Dorsolateral prefrontal cortex (tissue), 120 donors: ENCODE measurements at regions of chr2 and their contacts with region 1.

Region 1: GRCh38 chr2:190804182-190804795 is 76.3 kb upstream of the GLS start:
- DNase-seq: peak in 1 of 10 donors; percentile 5
- H3K4me3 ChIP-seq: peak overlapping the region in 5 of 59 donors; percentile 16 to 35 (median 24)
- H3K27ac ChIP-seq: no peak overlapping the region
- H3K27me3 ChIP-seq: no peaks in the 10 kb centered on the region
- CTCF ChIP-seq: peak; percentile 67 to 87 (median 79)

Region 2: GRCh38 chr2:190343500-190344275 is 460.6 kb before region 1 on chr2 and contains the start of gene INPP1:
- intact Hi-C with region 1: loop called in 1 of 2 experiments (anchors 5 kb)
- DNase-seq: peak in 9 of 10 donors; percentile 31 to 79 (median 55)
- H3K4me3 ChIP-seq: peak within 1 kb of the TSS; percentile 66 to 94 (median 81)
- H3K27ac ChIP-seq: peak within 1 kb of the TSS; percentile 65 to 98 (median 95)
- H3K27me3 ChIP-seq: no peaks in the 10 kb centered on the region
- CTCF ChIP-seq: no peak
- total RNA-seq, gene INPP1: 32.3 to 82.1 (median 48.4) TPM

Region 3: DNA sequence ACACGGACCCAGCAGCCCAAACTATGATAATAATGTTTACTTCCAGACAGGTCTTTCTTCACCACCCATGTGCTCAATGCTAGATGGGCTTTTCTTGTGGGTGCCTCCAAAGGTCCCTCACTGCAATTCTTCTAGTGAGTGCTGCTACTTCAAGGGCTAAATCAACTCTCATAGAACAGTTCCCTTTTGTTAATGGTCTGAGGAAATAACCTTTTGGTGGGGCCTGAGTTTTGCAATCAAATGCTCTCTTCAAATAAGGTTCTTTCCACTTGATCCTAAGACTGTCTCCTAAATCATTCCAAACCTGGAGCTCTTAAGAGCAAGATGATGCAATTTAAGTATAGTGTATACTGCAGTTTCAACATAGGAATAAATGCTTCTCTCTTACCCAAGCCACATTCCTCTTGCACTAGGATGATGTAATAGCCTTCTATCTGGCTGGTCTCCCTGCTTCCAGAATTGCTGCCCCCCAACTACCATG is 275.7 kb before region 1 on chr2:
- intact Hi-C with region 1: loop called (anchors 5 to 10 kb)
- DNase-seq: no peak
- H3K4me3 ChIP-seq: no peak overlapping the region
- H3K27ac ChIP-seq: no peak overlapping the region
- H3K27me3 ChIP-seq: no peaks in the 10 kb centered on the region
- CTCF ChIP-seq: no peak

Region 4: DNA sequence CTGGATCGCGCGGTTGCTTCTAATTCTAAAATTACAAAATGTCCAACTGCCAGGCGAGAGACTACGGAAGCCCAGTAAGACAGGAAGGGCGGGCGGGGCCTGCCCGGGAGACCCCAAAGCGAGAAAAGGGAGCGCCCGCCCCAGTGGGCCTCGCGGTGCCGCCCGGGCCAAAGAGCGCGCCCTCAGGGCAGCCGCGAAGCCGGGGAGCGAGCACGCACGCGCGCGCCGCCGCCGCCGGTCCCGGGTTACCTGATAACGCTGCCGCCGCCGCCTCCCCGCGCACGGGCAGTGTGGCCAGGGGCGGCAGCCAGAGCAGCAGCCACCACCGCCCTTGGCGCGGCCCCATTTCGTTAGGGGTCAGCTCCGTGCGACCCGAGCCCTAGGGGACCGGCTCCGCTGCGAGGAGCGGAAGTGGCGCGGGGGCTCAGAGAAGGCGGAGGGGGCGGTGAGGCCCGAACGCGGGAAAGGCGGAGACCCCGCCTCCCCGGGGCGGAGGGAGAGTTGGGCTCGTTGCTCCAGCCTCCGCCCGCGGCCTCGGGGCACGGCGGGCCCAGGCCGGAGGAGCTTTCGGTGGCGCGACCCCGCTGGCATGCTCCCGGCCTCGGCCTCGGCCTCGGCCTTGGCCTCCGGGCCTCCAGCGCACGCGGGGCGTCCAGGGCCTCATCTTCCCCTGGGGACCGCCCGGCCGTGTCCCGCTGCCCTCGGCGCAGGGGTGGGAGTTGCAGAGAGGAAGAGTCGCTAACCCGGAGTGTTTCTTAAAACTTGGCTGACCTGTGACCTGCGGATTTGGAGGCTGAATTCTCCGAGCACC is 269.8 kb before region 1 on chr2 and contains the start of gene NEMP2:
- intact Hi-C with region 1: loop called (anchors 5 to 10 kb)
- DNase-seq: peak; percentile 55 to 88 (median 66)
- H3K4me3 ChIP-seq: peak within 1 kb of the TSS; percentile 56 to 96 (median 84)
- H3K27ac ChIP-seq: peak within 1 kb of the TSS; percentile 82 to 99 (median 96)
- H3K27me3 ChIP-seq: no peaks in the 10 kb centered on the region
- CTCF ChIP-seq: peak in 25 of 56 donors; percentile 9 to 61 (median 28)
- total RNA-seq, gene NEMP2: 1.1 to 9.4 (median 3.7) TPM

Region 5: DNA sequence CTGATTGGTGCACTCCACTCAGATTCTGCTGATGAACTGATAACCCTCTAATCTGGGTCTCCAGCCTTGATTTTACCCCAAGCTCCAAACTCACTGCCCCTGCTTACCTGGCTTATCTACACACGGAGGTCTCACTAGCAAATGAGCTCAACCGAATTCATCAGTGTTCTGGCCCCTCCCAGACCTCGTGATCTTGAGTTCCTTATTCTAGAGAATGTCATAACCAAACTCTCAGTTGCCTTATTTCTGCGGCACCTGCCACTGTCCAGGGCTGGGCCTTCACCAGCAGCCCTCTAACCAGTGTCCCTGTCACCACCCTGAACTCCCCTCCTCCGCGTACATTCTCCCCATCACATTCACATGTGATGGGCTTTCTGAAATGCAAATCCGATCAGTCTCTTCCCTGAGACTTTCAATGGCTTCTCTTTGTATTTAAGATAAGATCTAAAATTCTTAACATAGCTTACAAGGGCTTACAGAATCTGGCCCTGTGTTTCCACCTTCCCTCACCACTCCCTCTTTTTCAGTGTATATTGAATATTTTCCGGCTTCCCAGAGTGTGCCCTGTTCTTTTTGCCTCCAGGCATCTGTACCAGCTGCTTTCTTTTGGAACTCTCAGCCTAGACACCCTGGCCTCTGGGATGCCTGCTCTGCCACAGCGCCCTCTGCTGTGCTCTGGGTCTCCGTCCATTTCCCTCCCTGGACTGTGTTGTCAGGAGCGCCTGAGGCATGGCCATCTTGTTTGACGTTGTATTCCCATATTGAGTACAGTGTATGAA is 124.3 kb before region 1 on chr2:
- intact Hi-C with region 1: loop called in 1 of 2 experiments (anchors 10 kb)
- DNase-seq: peak in 6 of 10 donors; percentile 31 to 73 (median 55)
- H3K4me3 ChIP-seq: no peak overlapping the region
- H3K27ac ChIP-seq: peak overlapping the region in 37 of 59 donors; percentile 9 to 79 (median 39)
- H3K27me3 ChIP-seq: no peaks in the 10 kb centered on the region
- CTCF ChIP-seq: peak in 53 of 56 donors; percentile 29 to 78 (median 58)